Activated B cell treated with CpG ODN at 0.5 μM for 24 hours (primary cell): ENCODE measurements at regions of chr11 and their contacts with region 1.

Region 1: GRCh38 chr11:798093-798713 is at the start of gene SLC25A22:
- DNase-seq: peak; percentile 95
- ATAC-seq: peak; percentile 77
- H3K4me3 Mint-ChIP-seq: peak within 1 kb of the TSS; percentile 93
- H3K27ac Mint-ChIP-seq: peak within 1 kb of the TSS; percentile 86
- H3K4me1 Mint-ChIP-seq: peaks cover 22% of the 10 kb centered on the region
- H3K27me3 Mint-ChIP-seq: no peaks in the 10 kb centered on the region
- CTCF ChIP-seq: peak; percentile 21
- total RNA-seq, gene SLC25A22: 30.1 and 35.4 TPM in 2 replicates

Region 2: GRCh38 chr11:568306-569157 is 229.7 kb before region 1 on chr11:
- CTCF ChIA-PET with region 1: no interaction called
- POLR2A ChIA-PET with region 1: no interaction called
- intact Hi-C with region 1: loop called (anchors 2 kb)
- DNase-seq: peak; percentile 96
- ATAC-seq: peak; percentile 93
- H3K4me3 Mint-ChIP-seq: peak overlapping the region; percentile 79
- H3K27ac Mint-ChIP-seq: peak overlapping the region; percentile 41
- H3K4me1 Mint-ChIP-seq: peaks cover 7% of the 10 kb centered on the region
- H3K27me3 Mint-ChIP-seq: no peaks in the 10 kb centered on the region
- CTCF ChIP-seq: no peak

Region 3: GRCh38 chr11:680476-680875 is 117.7 kb before region 1 on chr11:
- CTCF ChIA-PET with region 1: no interaction called
- POLR2A ChIA-PET with region 1: no interaction called
- intact Hi-C with region 1: no loop called
- DNase-seq: no peak
- ATAC-seq: no peak
- H3K4me3 Mint-ChIP-seq: no peak overlapping the region
- H3K27ac Mint-ChIP-seq: no peak overlapping the region
- H3K4me1 Mint-ChIP-seq: no peaks in the 10 kb centered on the region
- H3K27me3 Mint-ChIP-seq: no peaks in the 10 kb centered on the region
- CTCF ChIP-seq: no peak

Region 4: GRCh38 chr11:727859-728748 is 70.1 kb before region 1 on chr11:
- CTCF ChIA-PET with region 1: no interaction called
- POLR2A ChIA-PET with region 1: no interaction called
- intact Hi-C with region 1: loop called (anchors 1 kb)
- DNase-seq: peak; percentile 79
- ATAC-seq: peak; percentile 85
- H3K4me3 Mint-ChIP-seq: no peak overlapping the region
- H3K27ac Mint-ChIP-seq: no peak overlapping the region
- H3K4me1 Mint-ChIP-seq: peaks cover 8% of the 10 kb centered on the region
- H3K27me3 Mint-ChIP-seq: peaks cover 5% of the 10 kb centered on the region
- CTCF ChIP-seq: peak; percentile 91

Region 5: DNA sequence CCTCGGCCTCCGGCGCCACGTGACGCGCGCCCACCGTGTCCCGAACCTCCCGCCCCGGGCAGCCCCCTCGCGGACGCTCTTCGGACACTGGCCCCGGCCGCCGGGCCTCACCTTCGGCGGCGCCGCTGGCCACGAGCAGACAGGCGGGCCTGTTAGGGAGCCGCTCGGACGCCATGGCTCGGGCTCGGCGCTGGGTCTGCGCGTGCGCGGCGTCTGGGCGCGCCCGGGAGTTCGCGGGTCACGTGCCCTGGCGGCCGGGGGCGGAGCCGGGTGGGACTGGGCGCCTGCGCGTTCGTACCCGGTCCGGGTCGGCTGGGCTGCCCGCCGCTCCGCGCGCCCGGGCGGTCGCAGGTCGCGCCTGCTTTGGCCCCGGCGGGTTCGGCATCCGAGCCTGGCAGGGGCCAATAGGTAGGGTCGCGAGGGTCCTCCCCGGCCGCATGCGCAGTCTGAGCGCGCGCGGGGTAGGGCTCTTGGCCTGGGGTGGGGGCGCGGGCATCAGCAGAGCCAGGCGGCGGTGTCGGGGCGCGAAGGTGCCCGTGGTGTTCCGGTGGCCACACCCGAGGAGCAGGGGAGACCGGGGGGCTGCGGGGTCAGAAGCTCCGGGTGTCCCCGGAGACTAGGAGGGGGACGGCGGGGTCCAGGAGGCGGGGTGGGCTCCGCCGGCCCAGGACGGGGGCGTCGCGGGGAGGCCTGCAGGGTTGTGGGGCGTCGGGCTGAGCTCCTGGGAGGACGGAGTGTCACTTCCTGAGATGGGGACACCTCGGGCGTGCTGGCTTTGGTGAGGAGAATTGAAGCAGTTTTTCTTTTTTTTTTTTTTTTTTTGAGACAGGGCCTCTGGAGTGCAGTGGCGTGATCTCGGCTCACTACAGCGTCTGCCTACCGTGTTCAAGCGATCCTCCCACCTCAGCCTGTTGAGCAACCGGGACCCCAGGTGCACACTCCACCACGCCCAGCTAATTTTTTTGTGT is 20.6 kb before region 1 on chr11 and contains the start of gene GATD1:
- CTCF ChIA-PET with region 1: no interaction called
- POLR2A ChIA-PET with region 1: interaction called, 23 read pairs
- intact Hi-C with region 1: loop called (anchors 1 kb)
- DNase-seq: peak; percentile 98
- ATAC-seq: peak; percentile 87
- H3K4me3 Mint-ChIP-seq: peak within 1 kb of the TSS; percentile 81
- H3K27ac Mint-ChIP-seq: peak within 1 kb of the TSS; percentile 69
- H3K4me1 Mint-ChIP-seq: peaks cover 16% of the 10 kb centered on the region
- H3K27me3 Mint-ChIP-seq: no peaks in the 10 kb centered on the region
- CTCF ChIP-seq: no peak
- total RNA-seq, gene GATD1: 60.3 and 63.3 TPM in 2 replicates

Region 6: GRCh38 chr11:832321-833113 is 34.3 kb after region 1 on chr11 and contains the start of gene CD151:
- CTCF ChIA-PET with region 1: no interaction called
- POLR2A ChIA-PET with region 1: no interaction called
- intact Hi-C with region 1: loop called (anchors 5 kb)
- DNase-seq: peak; percentile 65
- ATAC-seq: peak; percentile 64
- H3K4me3 Mint-ChIP-seq: peak within 1 kb of the TSS; percentile 64
- H3K27ac Mint-ChIP-seq: no peak within 1 kb of the TSS
- H3K4me1 Mint-ChIP-seq: peaks cover 45% of the 10 kb centered on the region
- H3K27me3 Mint-ChIP-seq: peaks cover 5% of the 10 kb centered on the region
- CTCF ChIP-seq: no peak
- total RNA-seq, gene CD151: 14.4 and 14.5 TPM in 2 replicates